Activated B cell treated with CpG ODN at 0.5 μM for 24 hours (primary cell): ENCODE measurements at regions of chr18 and their contacts with region 1.

Region 1: GRCh38 chr18:79399275-79400081 is 3.7 kb downstream of the NFATC1 start:
- DNase-seq: peak; percentile 55
- ATAC-seq: peak; percentile 7
- H3K4me3 Mint-ChIP-seq: peak overlapping the region; percentile 81
- H3K27ac Mint-ChIP-seq: peak overlapping the region; percentile 87
- H3K4me1 Mint-ChIP-seq: peaks cover 65% of the 10 kb centered on the region
- H3K27me3 Mint-ChIP-seq: no peaks in the 10 kb centered on the region
- CTCF ChIP-seq: no peak

Region 2: GRCh38 chr18:79439201-79440023 is 39.9 kb after region 1 on chr18:
- CTCF ChIA-PET with region 1: interaction called, 4 read pairs
- POLR2A ChIA-PET with region 1: interaction called, 10 read pairs
- intact Hi-C with region 1: loop called (anchors 2 kb)
- DNase-seq: no peak
- ATAC-seq: no peak
- H3K4me3 Mint-ChIP-seq: peak overlapping the region; percentile 35
- H3K27ac Mint-ChIP-seq: peak overlapping the region; percentile 53
- H3K4me1 Mint-ChIP-seq: peaks cover 82% of the 10 kb centered on the region
- H3K27me3 Mint-ChIP-seq: no peaks in the 10 kb centered on the region
- CTCF ChIP-seq: no peak

Region 3: GRCh38 chr18:79588636-79589481 is 189.4 kb after region 1 on chr18:
- CTCF ChIA-PET with region 1: no interaction called
- POLR2A ChIA-PET with region 1: no interaction called
- intact Hi-C with region 1: no loop called
- DNase-seq: no peak
- ATAC-seq: no peak
- H3K4me3 Mint-ChIP-seq: no peak overlapping the region
- H3K27ac Mint-ChIP-seq: no peak overlapping the region
- H3K4me1 Mint-ChIP-seq: peaks cover 4% of the 10 kb centered on the region
- H3K27me3 Mint-ChIP-seq: peaks cover 2% of the 10 kb centered on the region
- CTCF ChIP-seq: no peak